Stomach (tissue), 19 donors: ENCODE measurements at regions of chr1 and their contacts with region 1.

Region 1: DNA sequence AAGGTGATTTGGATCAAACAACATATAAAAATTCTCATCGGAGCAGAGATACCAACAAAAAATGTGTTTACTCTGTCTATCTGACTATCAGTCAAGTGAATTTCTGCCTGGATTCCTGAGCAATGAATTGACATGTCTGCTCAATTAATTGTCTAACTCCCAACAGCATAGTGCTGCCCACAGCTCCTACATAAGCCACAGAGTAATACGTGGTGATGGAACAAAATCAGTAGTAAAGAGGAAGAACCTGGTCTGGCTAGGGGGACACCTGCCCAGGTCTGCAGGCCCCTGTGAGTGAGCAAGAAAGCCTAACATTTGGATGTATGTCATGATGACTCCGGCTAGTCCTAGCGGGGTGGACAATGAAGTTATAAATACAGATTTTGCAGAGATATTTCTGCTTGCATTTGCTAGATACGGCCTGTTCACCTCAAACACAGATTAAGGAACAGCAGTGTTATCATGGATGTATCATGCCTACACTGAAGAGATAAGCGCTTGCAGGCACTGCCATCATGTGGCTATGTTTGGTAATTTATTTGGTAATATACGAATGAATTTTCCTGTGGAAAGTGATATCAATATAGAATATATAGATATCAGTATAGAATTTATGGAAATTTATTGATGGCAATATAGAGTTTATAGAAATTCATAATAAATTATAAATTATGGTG is 69.6 kb upstream of the LRRC8B start:
- DNase-seq: peak; percentile 52 to 78
- H3K4me3 ChIP-seq: no peak overlapping the region
- H3K27ac ChIP-seq: no peak overlapping the region
- H3K4me1 ChIP-seq: peaks cover 0 to 4% (median 0%) of the 10 kb centered on the region in 4 donors
- H3K27me3 ChIP-seq: no peaks in the 10 kb centered on the region
- CTCF ChIP-seq: peak in 5 of 7 experiments; percentile 9 to 70 (median 59)
- EP300 ChIP-seq: no peak
- POLR2A ChIP-seq: no peak

Region 2: DNA sequence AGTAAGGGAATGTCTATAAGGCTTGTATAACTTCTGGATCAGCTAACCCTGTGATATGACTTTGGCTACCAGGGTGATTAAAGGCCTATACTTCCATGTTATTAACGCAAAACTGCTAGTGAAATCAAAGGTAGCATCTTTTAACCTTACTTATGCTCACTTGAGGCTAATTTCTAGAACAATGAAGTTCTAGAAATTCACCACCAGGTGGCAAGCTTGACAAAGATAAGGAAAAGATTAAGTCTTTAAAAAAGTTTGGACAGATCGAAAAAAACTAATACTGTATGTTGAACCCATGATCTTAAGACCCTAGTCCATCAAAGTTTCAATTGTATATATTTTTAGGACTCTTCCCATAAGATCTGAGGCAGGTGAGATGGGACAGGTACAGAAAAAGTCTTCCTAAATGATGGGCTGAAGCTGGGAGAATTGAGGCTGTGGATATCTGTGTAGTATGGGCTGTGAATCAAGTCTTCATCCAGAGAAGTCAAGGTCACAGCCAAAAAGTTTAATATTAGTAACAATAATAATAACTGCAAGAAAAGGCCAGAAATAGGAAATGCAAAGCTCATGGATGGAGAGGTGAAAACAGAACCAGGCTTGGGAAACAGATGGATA is 481.4 kb before region 1 on chr1:
- intact Hi-C with region 1: loop called (anchors 10 kb)
- DNase-seq: peak in 1 of 2 donors; percentile 53
- H3K4me3 ChIP-seq: no peak overlapping the region
- H3K27ac ChIP-seq: no peak overlapping the region
- H3K4me1 ChIP-seq: peaks cover 0 to 27% (median 8%) of the 10 kb centered on the region in 4 donors
- H3K27me3 ChIP-seq: no peaks in the 10 kb centered on the region
- CTCF ChIP-seq: peak in 5 of 7 experiments; percentile 19 to 64 (median 53)
- EP300 ChIP-seq: no peak
- POLR2A ChIP-seq: no peak

Region 3: DNA sequence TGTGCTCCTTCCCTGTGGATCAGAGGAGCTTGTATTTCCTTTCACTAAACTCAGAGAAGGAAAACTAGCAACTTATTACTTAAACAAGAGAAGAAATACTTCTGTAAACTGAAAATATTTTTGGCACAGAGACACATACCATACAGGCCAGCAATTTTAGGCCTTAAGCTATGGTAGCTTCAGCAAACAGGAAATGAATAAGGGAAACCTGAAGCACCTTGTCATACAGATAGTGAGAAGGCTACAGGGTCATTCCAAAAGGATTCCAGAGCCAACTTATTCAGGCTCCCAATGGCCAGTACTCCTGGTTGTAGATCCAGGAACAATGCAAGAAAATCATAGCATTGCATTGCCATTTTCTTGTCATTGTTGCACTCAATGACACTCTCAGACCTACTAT is 453.5 kb before region 1 on chr1:
- intact Hi-C with region 1: loop called (anchors 5 kb)
- DNase-seq: no peak
- H3K4me3 ChIP-seq: no peak overlapping the region
- H3K27ac ChIP-seq: peak overlapping the region in 1 of 5 donors; percentile 2
- H3K4me1 ChIP-seq: peaks cover 0 to 7% (median 2%) of the 10 kb centered on the region in 4 donors
- H3K27me3 ChIP-seq: no peaks in the 10 kb centered on the region
- CTCF ChIP-seq: no peak
- EP300 ChIP-seq: no peak
- POLR2A ChIP-seq: no peak